MCF 10A (cell line): ENCODE measurements at regions of chr6 and their contacts with region 1.

Region 1: DNA sequence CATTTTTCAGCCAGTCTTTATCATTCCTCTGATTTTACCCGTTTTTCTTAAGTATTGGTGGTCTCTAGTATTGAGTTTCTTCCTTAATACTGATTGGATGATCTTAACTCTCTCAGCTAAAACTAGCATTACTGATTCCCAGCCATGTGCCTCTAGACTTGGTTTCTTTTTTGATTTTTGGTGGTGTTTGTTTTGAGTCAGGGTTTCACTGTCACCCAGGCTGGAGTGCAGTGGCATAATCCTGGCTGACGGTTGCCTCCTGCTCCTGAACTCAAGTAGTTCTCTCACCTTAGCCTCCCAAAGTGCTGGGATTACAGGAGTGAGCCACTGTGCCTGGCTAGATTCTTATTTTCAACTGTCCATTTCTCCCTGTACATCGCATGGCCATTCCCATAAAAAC is 24.9 kb downstream of the DPPA5 start:
- DNase-seq: no peak
- H3K4me3 Mint-ChIP-seq: no peak overlapping the region
- H3K27ac Mint-ChIP-seq: no peak overlapping the region
- H3K4me1 Mint-ChIP-seq: peaks cover 5% of the 10 kb centered on the region
- H3K27me3 Mint-ChIP-seq: peaks cover 13% of the 10 kb centered on the region
- CTCF ChIP-seq: no peak

Region 2: GRCh38 chr6:72260489-72260888 is 1068.7 kb before region 1 on chr6:
- CTCF ChIA-PET with region 1: no interaction called
- POLR2A ChIA-PET with region 1: no interaction called
- intact Hi-C with region 1: no loop called
- DNase-seq: no peak
- H3K4me3 Mint-ChIP-seq: no peak overlapping the region
- H3K27ac Mint-ChIP-seq: no peak overlapping the region
- H3K4me1 Mint-ChIP-seq: no peaks in the 10 kb centered on the region
- H3K27me3 Mint-ChIP-seq: peaks cover 69% of the 10 kb centered on the region
- CTCF ChIP-seq: no peak

Region 3: DNA sequence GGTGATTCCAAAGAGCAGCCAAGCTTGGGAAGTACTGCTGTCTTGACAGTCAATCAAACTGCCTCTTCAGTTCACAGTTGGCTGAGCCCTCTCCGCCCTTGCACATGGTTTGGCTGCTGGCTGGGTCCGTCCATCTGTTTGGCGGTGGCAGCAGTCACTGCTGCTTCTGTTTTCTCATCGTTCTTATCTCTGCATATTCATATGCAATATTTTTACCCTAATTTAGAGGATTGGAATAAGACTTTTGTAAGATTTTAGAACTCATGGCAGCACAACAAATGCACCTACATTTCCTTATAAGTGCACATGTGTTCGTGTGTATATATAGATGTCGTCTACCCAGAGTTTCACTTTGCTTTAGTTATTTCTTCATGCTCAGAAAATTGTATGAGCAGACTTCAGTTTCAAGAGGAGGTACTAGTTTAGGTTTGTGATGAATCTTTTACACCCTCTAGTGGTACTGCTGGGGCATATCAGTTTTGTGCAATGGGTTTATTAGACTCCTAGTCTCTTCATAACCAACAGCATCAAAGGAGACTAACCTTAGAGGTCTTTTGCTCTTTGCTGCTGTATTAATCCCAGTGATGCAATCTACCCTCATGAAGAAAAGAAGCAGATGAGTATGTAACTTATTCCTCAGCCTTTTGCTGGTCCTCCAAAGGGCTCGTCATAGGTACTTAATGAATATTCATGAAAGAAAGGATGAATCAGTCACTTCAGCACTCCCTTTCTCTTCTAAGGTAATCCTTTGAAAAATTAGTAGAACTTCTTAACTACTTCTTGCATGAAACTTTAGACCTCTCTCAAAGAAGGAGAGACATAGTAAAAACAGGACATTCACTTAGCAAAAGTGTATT is 148.2 kb before region 1 on chr6:
- CTCF ChIA-PET with region 1: interaction called, 9 read pairs
- POLR2A ChIA-PET with region 1: no interaction called
- intact Hi-C with region 1: loop called (anchors 2 kb)
- DNase-seq: peak; percentile 70
- H3K4me3 Mint-ChIP-seq: peak overlapping the region; percentile 51
- H3K27ac Mint-ChIP-seq: no peak overlapping the region
- H3K4me1 Mint-ChIP-seq: no peaks in the 10 kb centered on the region
- H3K27me3 Mint-ChIP-seq: no peaks in the 10 kb centered on the region
- CTCF ChIP-seq: peak; percentile 81

Region 4: DNA sequence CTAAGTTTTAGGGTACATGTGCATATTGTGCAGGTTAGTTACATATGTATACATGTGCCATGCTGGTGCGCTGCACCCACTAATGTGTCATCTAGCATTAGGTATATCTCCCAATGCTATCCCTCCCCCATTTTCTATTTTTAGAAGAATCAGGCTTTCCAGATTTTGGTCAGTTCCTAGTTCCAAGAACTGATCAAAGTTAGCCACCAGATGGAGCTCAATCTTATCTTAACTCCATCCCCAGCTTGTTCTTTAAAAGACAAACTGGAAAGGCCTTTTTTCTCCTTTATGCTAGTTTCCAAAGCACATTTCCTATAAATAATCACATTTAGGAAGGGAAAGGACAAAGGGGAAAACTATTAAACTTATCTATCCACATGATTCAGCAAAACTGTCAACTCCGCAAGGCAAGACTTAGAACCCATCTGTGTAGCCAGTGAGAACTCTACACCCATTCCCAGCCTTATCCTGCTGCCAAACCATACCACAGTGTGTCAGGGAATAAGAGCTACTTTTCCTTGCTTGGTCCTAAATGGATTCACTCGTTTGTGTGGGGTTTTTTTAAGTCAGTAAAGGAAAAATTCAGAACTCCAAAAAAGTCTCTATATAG is 43.4 kb before region 1 on chr6:
- CTCF ChIA-PET with region 1: interaction called, 97 read pairs
- POLR2A ChIA-PET with region 1: interaction called, 6 read pairs
- intact Hi-C with region 1: loop called (anchors 1 kb)
- DNase-seq: peak; percentile 63
- H3K4me3 Mint-ChIP-seq: no peak overlapping the region
- H3K27ac Mint-ChIP-seq: no peak overlapping the region
- H3K4me1 Mint-ChIP-seq: peaks cover 6% of the 10 kb centered on the region
- H3K27me3 Mint-ChIP-seq: no peaks in the 10 kb centered on the region
- CTCF ChIP-seq: peak; percentile 35

Region 5: GRCh38 chr6:73309769-73310502 is 19.3 kb before region 1 on chr6:
- CTCF ChIA-PET with region 1: interaction called, 21 read pairs
- POLR2A ChIA-PET with region 1: interaction called, 4 read pairs
- intact Hi-C with region 1: no loop called
- DNase-seq: peak; percentile 59
- H3K4me3 Mint-ChIP-seq: peak overlapping the region; percentile 98
- H3K27ac Mint-ChIP-seq: peak overlapping the region; percentile 92
- H3K4me1 Mint-ChIP-seq: peaks cover 4% of the 10 kb centered on the region
- H3K27me3 Mint-ChIP-seq: no peaks in the 10 kb centered on the region
- CTCF ChIP-seq: peak; percentile 31

Region 6: GRCh38 chr6:73353636-73354388 is 24.6 kb after region 1 on chr6 and contains the start of gene DPPA5:
- CTCF ChIA-PET with region 1: interaction called, 11 read pairs
- POLR2A ChIA-PET with region 1: no interaction called
- intact Hi-C with region 1: no loop called
- DNase-seq: no peak
- H3K4me3 Mint-ChIP-seq: no peak within 1 kb of the TSS
- H3K27ac Mint-ChIP-seq: no peak within 1 kb of the TSS
- H3K4me1 Mint-ChIP-seq: no peaks in the 10 kb centered on the region
- H3K27me3 Mint-ChIP-seq: no peaks in the 10 kb centered on the region
- CTCF ChIP-seq: no peak
- total RNA-seq, gene DPPA5: not detected in 2 replicates